ENCODE measurements at regions of chr15 and their contacts with region 1.

Region 1: DNA sequence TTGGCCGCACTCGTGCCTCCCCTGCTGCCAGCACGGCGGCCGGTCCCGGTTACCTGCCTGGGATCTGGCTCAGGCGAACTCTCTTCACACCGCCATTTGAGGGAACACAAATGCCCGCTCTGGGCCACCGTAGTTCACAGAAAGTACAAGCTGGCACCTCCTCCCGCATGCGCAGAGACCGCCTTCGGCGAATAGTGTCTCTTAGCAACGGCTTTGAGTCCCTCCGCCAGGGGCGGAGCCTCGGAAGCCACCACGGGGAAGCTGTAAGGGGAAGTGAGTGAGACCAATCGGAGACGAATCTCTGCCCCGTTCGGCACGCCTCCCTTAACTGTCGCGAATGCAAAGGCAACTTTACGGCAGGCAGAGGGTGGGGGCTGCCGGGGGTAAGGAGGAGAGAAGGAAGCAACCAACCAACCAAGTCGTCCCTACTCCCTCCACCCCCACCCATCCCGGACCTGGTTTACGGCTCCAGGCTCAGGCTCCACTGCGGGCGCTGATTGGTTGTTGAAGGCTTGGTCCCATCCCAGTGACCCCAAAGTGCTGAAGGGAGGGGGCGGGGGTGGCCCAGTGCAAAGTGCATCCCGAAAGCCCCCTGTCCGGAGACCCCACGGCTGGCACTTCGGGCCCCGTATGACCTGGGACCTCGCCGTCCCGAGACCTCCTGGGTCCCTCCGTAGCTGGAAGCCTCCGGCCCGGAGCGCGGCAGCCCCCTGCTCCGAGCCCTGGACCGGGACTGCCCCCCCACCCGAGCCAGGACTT is at the starts of genes ASB7 and LINS1:
- DNase-seq: peak; percentile 99 to 100 (median 100)
- H3K4me3 ChIP-seq: peak within 1 kb of the TSS; percentile 85 to 97
- H3K4me3 Mint-ChIP-seq: no peak within 1 kb of the TSS
- H3K27ac ChIP-seq: peak within 1 kb of the TSS; percentile 95
- H3K27ac Mint-ChIP-seq: peak within 1 kb of the TSS in 6 of 7 donors; percentile 89 to 98 (median 94)
- H3K4me1 ChIP-seq: peaks cover 58% of the 10 kb centered on the region
- H3K4me1 Mint-ChIP-seq: peaks cover 36 to 56% (median 51%) of the 10 kb centered on the region in 4 donors
- H3K27me3 ChIP-seq: no peaks in the 10 kb centered on the region
- H3K27me3 Mint-ChIP-seq: no peaks in the 10 kb centered on the region
- total RNA-seq, gene ASB7: 19.5 to 20.0 TPM
- total RNA-seq, gene LINS1: 76.4 to 84.0 TPM

Region 2: DNA sequence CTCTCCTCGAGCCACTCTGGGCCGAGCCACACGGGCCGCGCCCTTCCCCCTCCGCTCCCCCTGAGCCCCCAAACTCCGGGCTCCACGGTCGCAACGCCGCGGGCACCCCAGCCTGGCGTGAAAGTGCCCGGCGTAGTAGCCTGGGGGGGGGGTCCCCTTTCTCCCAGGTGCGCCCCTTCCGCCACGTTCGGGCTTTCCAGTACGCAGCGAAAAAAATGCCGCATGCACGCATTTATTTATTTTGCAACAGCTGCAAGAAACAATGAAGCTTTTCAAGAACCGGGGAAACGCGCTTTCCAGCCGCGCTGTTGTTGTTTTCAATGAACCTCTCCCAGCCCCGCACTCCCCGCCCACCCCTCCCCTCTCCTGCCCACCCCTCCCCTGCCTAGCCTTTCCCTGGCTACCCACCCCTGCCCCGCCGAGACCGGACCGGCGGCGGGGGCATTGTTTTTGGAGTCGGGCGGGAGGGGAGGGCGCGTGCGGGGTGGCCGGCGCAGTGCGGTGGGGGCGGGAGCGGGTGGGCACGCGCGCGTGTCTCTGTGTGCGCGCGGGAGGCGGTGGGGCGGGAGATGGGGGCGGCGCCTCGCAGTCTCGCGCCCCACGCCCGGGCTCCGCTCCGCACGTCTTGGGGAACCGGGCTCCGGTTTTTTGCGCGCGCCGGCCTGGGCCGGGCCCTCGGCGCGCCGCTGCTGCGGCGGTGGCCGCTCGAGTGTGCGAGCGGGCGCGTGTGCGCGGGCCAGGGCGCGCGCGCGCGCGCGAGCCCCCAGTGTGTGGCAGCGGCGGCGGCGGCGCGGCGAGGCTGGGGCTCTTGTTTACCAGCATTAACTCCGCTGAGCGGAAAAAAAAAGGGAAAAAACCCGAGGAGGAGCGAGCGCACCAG is 1954.2 kb before region 1 on chr15 and contains the start of gene IGF1R:
- CTCF ChIA-PET with region 1: no interaction called
- POLR2A ChIA-PET with region 1: no interaction called
- intact Hi-C with region 1: loop called (anchors 5 kb)
- DNase-seq: peak; percentile 76 to 88 (median 87)
- H3K4me3 ChIP-seq: peak within 1 kb of the TSS in 1 of 2 donors; percentile 59
- H3K4me3 Mint-ChIP-seq: peak within 1 kb of the TSS; percentile 84 to 88 (median 87)
- H3K27ac ChIP-seq: no peak within 1 kb of the TSS
- H3K27ac Mint-ChIP-seq: peak within 1 kb of the TSS in 6 of 7 donors; percentile 67 to 91 (median 84)
- H3K4me1 ChIP-seq: peaks cover 23% of the 10 kb centered on the region
- H3K4me1 Mint-ChIP-seq: peaks cover 17 to 33% (median 24%) of the 10 kb centered on the region in 4 donors
- H3K27me3 ChIP-seq: peaks cover 14% of the 10 kb centered on the region
- H3K27me3 Mint-ChIP-seq: peaks cover 14 to 21% of the 10 kb centered on the region in 2 donors
- total RNA-seq, gene IGF1R: 47.2 to 49.2 TPM

Region 3: DNA sequence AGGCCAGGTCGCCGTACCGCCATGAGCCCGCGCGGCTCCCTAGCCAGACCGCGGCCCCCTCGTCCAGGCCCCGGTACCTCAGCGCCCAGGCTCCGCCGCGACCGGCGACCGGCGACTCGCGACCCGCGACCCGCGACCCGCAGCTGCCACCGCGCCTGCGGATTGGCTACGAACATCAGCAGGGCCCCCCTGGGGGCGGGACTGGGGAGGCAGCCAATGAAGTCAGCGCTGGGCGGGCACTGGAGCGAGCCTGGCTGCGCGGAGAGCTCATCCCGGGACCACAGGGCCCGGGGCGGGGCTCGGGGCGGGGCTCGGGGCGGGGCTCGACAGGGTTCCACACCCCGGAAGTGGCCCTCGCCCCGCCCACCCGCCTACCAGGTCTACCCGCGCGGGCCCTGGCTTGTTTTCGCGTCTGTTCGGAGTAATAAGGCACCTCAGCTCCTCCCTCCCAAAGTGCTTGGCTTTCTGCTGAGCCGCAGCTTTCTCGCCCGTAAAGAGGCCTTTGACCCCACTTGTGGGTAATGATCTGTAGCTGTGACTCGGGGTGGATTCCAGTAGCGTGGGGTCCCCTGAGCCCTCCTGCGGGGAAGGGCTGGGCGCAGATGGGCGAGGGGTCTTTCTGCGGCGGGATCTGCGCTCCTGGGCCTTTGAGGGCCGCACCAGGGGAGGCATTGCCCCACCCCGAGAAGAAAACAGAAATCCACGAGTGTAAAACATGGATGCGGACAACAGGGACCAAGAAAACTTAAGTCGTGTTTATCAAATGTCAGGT is 868.8 kb before region 1 on chr15 and contains the start of gene LYSMD4:
- CTCF ChIA-PET with region 1: no interaction called
- POLR2A ChIA-PET with region 1: interaction called, 3 read pairs
- intact Hi-C with region 1: loop called (anchors 2 kb)
- DNase-seq: peak; percentile 95 to 97 (median 96)
- H3K4me3 ChIP-seq: peak within 1 kb of the TSS; percentile 6 to 67
- H3K4me3 Mint-ChIP-seq: peak within 1 kb of the TSS; percentile 83 to 95 (median 87)
- H3K27ac ChIP-seq: peak within 1 kb of the TSS; percentile 46
- H3K27ac Mint-ChIP-seq: peak within 1 kb of the TSS; percentile 80 to 97 (median 88)
- H3K4me1 ChIP-seq: peaks cover 14% of the 10 kb centered on the region
- H3K4me1 Mint-ChIP-seq: peaks cover 12 to 24% (median 16%) of the 10 kb centered on the region in 4 donors
- H3K27me3 ChIP-seq: no peaks in the 10 kb centered on the region
- H3K27me3 Mint-ChIP-seq: no peaks in the 10 kb centered on the region
- total RNA-seq, gene LYSMD4: 18.0 to 19.0 TPM

Region 4: GRCh38 chr15:100341662-100342560 is 260.3 kb before region 1 on chr15 and contains the start of gene ADAMTS17:
- CTCF ChIA-PET with region 1: interaction called, 7 read pairs
- POLR2A ChIA-PET with region 1: interaction called, 10 read pairs
- intact Hi-C with region 1: loop called (anchors 1 kb)
- DNase-seq: peak; percentile 94 to 97 (median 95)
- H3K4me3 ChIP-seq: peak within 1 kb of the TSS in 1 of 2 donors; percentile 79
- H3K4me3 Mint-ChIP-seq: peak within 1 kb of the TSS; percentile 57 to 86 (median 75)
- H3K27ac ChIP-seq: peak within 1 kb of the TSS; percentile 43
- H3K27ac Mint-ChIP-seq: peak within 1 kb of the TSS; percentile 29 to 87 (median 77)
- H3K4me1 ChIP-seq: peaks cover 22% of the 10 kb centered on the region
- H3K4me1 Mint-ChIP-seq: peaks cover 13 to 34% (median 15%) of the 10 kb centered on the region in 4 donors
- H3K27me3 ChIP-seq: no peaks in the 10 kb centered on the region
- H3K27me3 Mint-ChIP-seq: no peaks in the 10 kb centered on the region
- total RNA-seq, gene ADAMTS17: 4.7 to 6.2 TPM

Region 5: DNA sequence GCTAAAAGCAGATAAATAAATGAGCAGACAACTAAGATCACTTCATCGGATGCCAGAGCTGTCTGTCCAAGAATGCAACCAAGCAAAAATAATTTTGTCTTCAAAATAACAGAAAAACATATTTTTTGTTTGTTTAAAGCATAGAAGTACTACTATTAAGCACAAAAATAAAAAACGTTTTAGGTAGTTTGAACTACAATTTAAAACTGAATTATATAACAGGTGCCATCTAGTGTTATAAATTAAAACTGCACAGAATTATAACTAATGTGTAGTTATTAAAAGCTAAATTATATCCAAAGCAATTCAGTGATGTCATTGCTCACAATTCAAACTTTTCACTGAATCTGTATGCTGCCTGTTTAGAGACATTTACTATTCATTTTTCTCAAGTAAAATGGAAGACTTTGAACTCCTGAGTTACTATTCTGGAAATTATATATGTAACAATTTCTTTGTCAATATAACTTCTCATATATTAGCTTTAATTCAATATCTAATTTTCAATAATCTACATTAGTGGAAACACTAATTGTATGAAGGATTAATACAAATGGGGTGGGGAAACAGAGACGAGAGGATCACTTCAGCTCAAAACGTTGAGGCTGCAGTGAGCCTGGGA is 29.8 kb before region 1 on chr15:
- CTCF ChIA-PET with region 1: interaction called, 16 read pairs
- POLR2A ChIA-PET with region 1: interaction called, 6 read pairs
- intact Hi-C with region 1: loop called (anchors 2 kb)
- DNase-seq: peak in 4 of 5 donors; percentile 35 to 41 (median 36)
- H3K4me3 ChIP-seq: no peak overlapping the region
- H3K4me3 Mint-ChIP-seq: peak overlapping the region in 7 of 8 donors; percentile 77 to 88 (median 84)
- H3K27ac ChIP-seq: peak overlapping the region; percentile 37
- H3K27ac Mint-ChIP-seq: peak overlapping the region in 5 of 7 donors; percentile 81 to 95 (median 94)
- H3K4me1 ChIP-seq: peaks cover 31% of the 10 kb centered on the region
- H3K4me1 Mint-ChIP-seq: peaks cover 32 to 58% (median 42%) of the 10 kb centered on the region in 4 donors
- H3K27me3 ChIP-seq: no peaks in the 10 kb centered on the region
- H3K27me3 Mint-ChIP-seq: no peaks in the 10 kb centered on the region

Region 6: GRCh38 chr15:101294731-101295606 is 692.7 kb after region 1 on chr15 and contains the start of gene SNRPA1:
- CTCF ChIA-PET with region 1: no interaction called
- POLR2A ChIA-PET with region 1: interaction called, 7 read pairs
- intact Hi-C with region 1: loop called (anchors 1 kb)
- DNase-seq: peak; percentile 94 to 97 (median 95)
- H3K4me3 ChIP-seq: peak within 1 kb of the TSS; percentile 93 to 96
- H3K4me3 Mint-ChIP-seq: peak within 1 kb of the TSS; percentile 93 to 99 (median 96)
- H3K27ac ChIP-seq: peak within 1 kb of the TSS; percentile 94
- H3K27ac Mint-ChIP-seq: peak within 1 kb of the TSS; percentile 89 to 99 (median 98)
- H3K4me1 ChIP-seq: peaks cover 47% of the 10 kb centered on the region
- H3K4me1 Mint-ChIP-seq: peaks cover 26 to 57% (median 39%) of the 10 kb centered on the region in 4 donors
- H3K27me3 ChIP-seq: no peaks in the 10 kb centered on the region
- H3K27me3 Mint-ChIP-seq: no peaks in the 10 kb centered on the region
- total RNA-seq, gene SNRPA1: 90.5 to 100 TPM

Region 7: GRCh38 chr15:101723874-101724674 is 1121.8 kb after region 1 on chr15 and contains the start of gene TARS3:
- CTCF ChIA-PET with region 1: no interaction called
- POLR2A ChIA-PET with region 1: no interaction called
- intact Hi-C with region 1: loop called (anchors 1 kb)
- DNase-seq: peak; percentile 90 to 97 (median 90)
- H3K4me3 ChIP-seq: peak within 1 kb of the TSS; percentile 45 to 76
- H3K4me3 Mint-ChIP-seq: peak within 1 kb of the TSS; percentile 83 to 97 (median 92)
- H3K27ac ChIP-seq: peak within 1 kb of the TSS; percentile 75
- H3K27ac Mint-ChIP-seq: peak within 1 kb of the TSS; percentile 87 to 95 (median 91)
- H3K4me1 ChIP-seq: peaks cover 22% of the 10 kb centered on the region
- H3K4me1 Mint-ChIP-seq: peaks cover 17 to 43% (median 30%) of the 10 kb centered on the region in 4 donors
- H3K27me3 ChIP-seq: no peaks in the 10 kb centered on the region
- H3K27me3 Mint-ChIP-seq: no peaks in the 10 kb centered on the region
- total RNA-seq, gene TARS3: 35.8 to 39.8 TPM

Measured in CD4-positive, alpha-beta memory T cell (primary cell).